ENCODE measurements at regions of chr9 and their contacts with region 1.

Region 1: GRCh38 chr9:33893861-33894260 is 76.9 kb downstream of the UBE2R2 start:
- DNase-seq: no peak
- ATAC-seq: no peak
- H3K4me3 ChIP-seq: no peak overlapping the region
- H3K27ac ChIP-seq: no peak overlapping the region
- H3K4me1 ChIP-seq: no peaks in the 10 kb centered on the region
- H3K27me3 ChIP-seq: no peaks in the 10 kb centered on the region
- CTCF ChIP-seq: no peak

Region 2: DNA sequence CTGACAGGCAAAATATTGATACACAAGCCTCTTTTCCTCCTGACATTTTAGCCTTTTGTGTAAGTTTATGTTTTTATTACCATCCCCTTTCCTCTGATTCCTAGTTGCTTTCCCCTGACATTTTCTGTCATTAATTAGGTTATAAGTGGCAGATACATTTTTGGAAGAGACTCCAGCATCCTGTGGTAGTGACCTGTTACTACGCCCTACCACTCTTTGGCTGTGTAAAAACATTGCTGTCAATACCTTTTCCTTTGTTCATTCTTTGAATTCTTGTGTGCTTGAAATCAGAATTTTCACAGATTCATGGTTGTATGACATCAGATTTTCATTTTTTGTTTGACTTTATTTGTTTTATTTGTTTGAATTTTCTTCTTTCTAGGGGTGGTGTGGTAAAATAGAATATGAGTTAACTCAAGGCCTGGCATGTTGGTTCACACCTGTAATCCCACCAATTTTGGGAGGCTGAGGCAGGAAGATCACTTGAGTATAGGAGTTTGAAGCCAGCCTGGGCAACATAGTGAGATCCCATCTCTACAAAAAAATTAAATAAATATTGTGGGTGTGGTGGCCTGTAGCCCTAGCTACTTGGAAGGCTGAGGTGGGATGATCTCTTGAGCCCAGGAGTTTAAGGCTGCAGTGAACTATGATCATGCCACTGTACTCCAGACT is 33.5 kb before region 1 on chr9:
- CTCF ChIA-PET with region 1: no interaction called
- POLR2A ChIA-PET with region 1: no interaction called
- intact Hi-C with region 1: no loop called
- DNase-seq: no peak
- ATAC-seq: peak; percentile 35; the same call in 1 of the 2 replicates
- H3K4me3 ChIP-seq: no peak overlapping the region
- H3K27ac ChIP-seq: no peak overlapping the region
- H3K4me1 ChIP-seq: no peaks in the 10 kb centered on the region
- H3K27me3 ChIP-seq: no peaks in the 10 kb centered on the region
- CTCF ChIP-seq: peak; percentile 20; the same call in 1 of the 2 replicates

Region 3: DNA sequence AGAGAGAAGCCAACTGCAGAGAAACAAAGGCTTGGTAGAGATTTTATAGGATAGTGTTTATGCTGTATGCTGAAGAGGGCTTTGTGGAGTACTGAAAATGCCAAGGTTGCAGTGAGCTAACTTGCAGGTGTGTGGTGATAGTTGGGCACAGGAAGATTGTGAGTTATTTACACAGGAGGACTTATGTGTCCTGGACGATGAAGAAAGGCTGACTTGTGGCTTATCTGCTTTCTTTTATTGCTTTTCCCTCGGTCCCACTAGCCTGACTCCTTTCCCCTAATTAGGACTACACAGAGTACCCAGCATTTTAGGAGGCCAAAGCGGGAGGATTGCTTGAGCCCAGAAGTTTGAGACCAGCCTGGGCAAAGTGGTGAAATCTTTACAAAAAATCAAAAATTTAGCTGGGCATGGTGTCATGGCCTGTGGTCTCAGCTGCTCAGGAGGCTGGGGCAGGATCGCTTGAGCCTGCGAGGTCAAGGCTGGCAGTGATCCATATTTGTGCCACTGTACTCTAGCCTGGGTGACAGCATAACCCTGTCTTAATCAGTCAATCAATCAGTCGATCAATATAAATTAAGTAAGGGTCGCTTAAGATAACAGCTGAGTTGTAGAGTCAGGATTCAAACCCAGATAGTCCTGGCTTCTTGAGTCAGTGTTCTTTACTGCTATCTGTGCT is 15.0 kb before region 1 on chr9:
- CTCF ChIA-PET with region 1: no interaction called
- POLR2A ChIA-PET with region 1: no interaction called
- intact Hi-C with region 1: loop called (anchors 1 kb)
- DNase-seq: no peak
- ATAC-seq: no peak
- H3K4me3 ChIP-seq: no peak overlapping the region
- H3K27ac ChIP-seq: no peak overlapping the region
- H3K4me1 ChIP-seq: no peaks in the 10 kb centered on the region; the same call in 1 of the 2 replicates
- H3K27me3 ChIP-seq: no peaks in the 10 kb centered on the region
- CTCF ChIP-seq: no peak